Left cardiac atrium (tissue), 4 donors: ENCODE measurements at regions of chr6 and their contacts with region 1.

Region 1: DNA sequence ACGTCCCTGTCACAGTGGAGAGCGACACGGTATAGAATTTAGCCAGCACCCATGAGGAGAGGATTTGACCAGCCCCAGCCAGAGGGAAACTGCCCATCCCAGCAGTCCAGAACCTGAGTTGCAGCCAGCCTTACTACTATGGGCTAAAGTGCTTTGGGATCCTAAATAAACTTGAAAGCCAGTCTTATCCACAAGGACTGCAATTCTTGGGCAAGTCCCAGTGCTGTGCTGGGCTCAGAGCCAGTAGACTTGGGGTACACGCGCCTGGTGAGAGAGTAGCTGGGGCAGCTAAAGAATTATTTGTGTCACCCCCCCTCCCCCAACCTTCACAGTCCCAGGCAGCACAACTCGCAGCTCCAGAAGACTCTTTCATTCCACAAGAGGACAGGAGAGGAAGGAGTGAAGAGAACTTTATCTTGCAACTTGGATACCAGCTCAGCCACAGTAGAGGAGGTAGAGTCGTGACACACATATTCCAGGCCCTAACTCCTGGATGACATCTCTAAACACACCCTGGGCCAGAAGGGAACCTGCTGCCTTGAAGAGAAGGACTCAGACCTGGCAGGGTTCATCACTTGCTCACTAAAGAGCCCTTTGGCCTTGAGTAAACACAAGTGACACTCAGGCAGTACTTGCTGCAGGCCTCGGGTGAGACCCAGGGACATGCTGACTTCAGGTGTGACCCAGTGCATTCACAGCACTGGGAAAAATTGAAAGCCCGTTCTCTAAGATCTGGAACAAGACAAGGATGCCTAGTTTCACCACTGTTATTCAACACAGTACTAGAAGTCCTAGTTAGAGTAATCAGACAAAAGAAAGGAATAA is 100.3 kb downstream of the REV3L start:
- DNase-seq: no peak
- ATAC-seq: peak; percentile 19 to 45

Region 2: GRCh38 chr6:110348961-110349680 is 1033.6 kb before region 1 on chr6:
- intact Hi-C with region 1: no loop called
- DNase-seq: no peak
- ATAC-seq: no peak

Region 3: DNA sequence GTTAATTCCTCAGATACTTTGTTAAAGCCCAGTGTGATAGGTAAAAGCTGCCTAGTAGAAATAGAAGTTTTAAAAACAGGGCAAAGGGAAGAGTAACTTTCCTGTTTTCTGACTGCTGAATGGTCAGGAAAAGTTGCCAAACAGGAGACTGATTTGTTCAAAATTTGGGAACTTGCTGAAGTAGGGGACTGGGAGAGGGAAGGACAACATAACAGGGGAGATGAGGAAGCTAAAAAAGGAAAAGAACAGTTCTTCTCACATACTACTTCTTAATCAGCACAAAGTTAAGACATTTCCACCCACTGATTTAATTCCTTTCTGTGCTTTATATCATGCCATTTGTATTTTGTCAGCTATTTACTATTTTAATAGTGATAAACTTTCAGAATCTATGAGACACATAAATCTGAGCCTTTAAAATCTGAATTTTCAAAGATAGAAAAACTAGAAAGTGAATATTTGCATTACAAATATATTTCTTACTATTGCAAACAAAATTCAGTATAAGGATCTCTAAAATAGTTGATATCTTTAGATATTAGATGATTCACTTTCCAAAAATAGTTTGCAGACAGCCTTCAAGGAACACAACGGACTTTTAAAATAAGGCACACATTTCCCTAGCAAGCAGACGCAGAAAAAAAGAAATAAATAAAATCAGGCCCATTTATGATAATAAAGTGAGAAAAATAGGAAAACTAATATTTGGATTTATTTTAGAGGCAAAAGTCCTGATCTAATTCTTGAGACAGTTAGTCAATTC is 332.2 kb before region 1 on chr6:
- intact Hi-C with region 1: no loop called
- DNase-seq: no peak
- ATAC-seq: peak in 1 of 2 donors; percentile 36

Region 4: DNA sequence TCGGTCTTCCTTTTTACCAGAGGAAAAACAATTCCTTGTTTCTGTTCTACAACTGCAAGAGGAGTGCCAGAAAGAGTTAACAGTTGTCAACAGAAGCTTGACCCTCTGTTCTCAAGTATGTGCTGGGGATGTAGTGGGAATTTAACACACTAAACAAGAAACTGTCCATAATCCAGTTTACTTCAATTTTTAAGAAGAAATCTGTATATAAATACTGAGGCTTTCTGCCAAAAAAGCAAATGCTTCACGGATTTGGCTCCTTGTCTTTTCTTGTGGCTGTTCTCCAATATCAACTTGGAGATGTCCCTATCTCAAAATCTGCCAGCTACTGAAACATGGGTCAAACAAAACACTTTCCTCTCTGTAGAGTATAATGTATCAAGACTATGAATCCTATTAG is 73.5 kb after region 1 on chr6:
- intact Hi-C with region 1: loop called in 1 of 2 experiments (anchors 10 kb)
- DNase-seq: no peak
- ATAC-seq: no peak

Region 5: GRCh38 chr6:112833581-112834131 is 1451.0 kb after region 1 on chr6:
- intact Hi-C with region 1: no loop called
- DNase-seq: no peak
- ATAC-seq: no peak